ENCODE measurements at regions of chr3 and their contacts with region 1.

Region 1: GRCh38 chr3:172501560-172501959 is 21.7 kb downstream of the TNFSF10 start:
- DNase-seq: no peak
- H3K4me3 ChIP-seq: no peak overlapping the region
- H3K27ac ChIP-seq: no peak overlapping the region
- H3K27me3 ChIP-seq: no peaks in the 10 kb centered on the region
- CTCF ChIP-seq: no peak

Region 2: GRCh38 chr3:172591876-172592771 is 90.6 kb after region 1 on chr3:
- intact Hi-C with region 1: loop called in 1 of 2 experiments (anchors 5 kb)
- DNase-seq: no peak
- H3K4me3 ChIP-seq: no peak overlapping the region
- H3K27ac ChIP-seq: no peak overlapping the region
- H3K27me3 ChIP-seq: no peaks in the 10 kb centered on the region
- CTCF ChIP-seq: no peak

Region 3: DNA sequence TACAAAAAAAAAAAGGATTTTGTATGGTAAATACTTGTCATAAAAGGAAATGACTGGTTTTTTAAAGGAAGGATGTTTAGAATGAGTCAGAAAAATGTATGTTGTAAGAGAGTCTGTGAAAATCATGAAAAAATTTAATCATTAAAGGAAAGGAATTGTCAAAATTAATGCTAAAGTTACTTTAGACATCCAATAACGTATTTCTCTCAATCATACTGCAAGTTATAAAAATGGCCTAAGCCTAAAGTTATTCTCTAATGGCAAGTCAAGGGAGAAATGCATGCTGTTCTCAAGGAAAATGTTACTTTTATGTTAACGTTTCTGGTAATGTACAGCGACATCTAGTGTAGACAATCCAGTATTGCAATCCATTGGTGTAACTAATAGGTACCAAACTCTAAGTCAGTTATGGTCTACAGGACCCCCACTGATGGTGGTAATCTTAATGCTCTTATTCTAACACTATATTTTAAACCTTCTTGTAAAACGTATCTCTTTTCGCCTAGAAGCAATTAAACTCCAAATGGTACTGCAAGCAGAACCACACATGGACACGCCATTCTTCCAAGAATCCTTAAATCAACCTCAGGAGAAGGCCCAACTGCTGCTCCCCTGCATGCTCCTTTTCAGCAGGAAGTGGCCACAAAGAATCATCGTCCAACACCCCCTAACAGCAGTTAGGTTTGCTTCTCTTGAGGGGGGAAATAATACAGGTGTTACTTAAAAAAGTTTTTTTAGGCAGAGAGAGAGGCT is 174.1 kb after region 1 on chr3:
- intact Hi-C with region 1: no loop called
- DNase-seq: no peak
- H3K4me3 ChIP-seq: no peak overlapping the region
- H3K27ac ChIP-seq: no peak overlapping the region
- H3K27me3 ChIP-seq: no peaks in the 10 kb centered on the region
- CTCF ChIP-seq: peak; percentile 52 to 82 (median 72)

Measured in dorsolateral prefrontal cortex (tissue), 120 donors.